Mammary epithelial cell (primary cell): ENCODE measurements at regions of chr6 and their contacts with region 1.

Region 1: DNA sequence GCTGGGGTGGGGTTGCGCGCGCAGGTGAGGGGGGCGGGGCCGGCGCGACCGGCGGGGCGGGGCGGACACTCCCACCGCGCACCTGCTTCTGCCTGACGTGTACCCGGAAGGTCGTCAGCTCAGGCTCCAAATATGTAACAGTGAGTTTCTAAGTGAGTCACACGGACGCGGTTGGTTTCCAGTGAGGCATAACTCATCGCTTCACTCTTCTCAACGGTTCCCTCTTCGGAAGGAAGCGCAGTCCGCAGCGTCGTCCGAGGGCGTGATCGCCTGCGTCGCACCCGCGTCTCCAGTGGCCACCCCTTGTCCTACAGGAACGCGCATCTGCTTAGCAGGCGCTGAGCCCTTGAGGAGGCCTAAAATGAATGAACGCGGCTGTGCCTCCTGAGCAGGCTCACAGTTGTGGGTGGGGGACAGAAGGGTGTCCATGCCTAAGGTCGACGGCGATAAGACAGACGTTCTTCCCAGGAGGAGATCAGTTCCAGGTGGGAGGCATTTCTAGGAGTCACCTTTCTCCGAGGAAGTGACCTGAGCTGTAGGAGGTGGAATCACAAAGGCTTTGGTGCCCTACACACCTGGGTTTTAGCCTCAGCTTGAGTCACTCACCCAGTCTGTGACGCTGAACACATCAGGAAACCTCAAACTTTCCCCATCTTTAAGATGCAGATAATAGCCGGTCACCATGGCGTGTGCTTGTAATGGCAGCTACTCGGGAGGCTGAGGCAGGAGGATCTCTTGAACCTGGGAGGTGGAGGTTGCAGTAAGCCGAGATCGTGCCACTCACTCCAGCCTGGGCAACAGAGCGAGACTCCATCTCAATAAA is 50.9 kb upstream of the EZR start:
- DNase-seq: peak; percentile 99
- H3K4me3 ChIP-seq: peak overlapping the region in 2 of 3 experiments; percentile 35 to 41
- H3K27ac ChIP-seq: peak overlapping the region; percentile 100
- H3K4me1 ChIP-seq: peaks cover 16% of the 10 kb centered on the region
- H3K27me3 ChIP-seq: no peaks in the 10 kb centered on the region
- CTCF ChIP-seq: peak in 1 of 2 donors; percentile 50

Region 2: GRCh38 chr6:158926416-158926815 is 56.4 kb after region 1 on chr6:
- CTCF ChIA-PET with region 1: no interaction called
- dilution Hi-C with region 1: no loop called
- in situ Hi-C with region 1: no loop called
- intact Hi-C with region 1: loop called (anchors 2 kb)
- DNase-seq: peak; percentile 80
- H3K4me3 ChIP-seq: no peak overlapping the region
- H3K27ac ChIP-seq: peak overlapping the region; percentile 48
- H3K4me1 ChIP-seq: peaks cover 5% of the 10 kb centered on the region
- H3K27me3 ChIP-seq: no peaks in the 10 kb centered on the region
- CTCF ChIP-seq: no peak